K562 (cell line): ENCODE measurements at regions of chr2 and their contacts with region 1.

Region 1: DNA sequence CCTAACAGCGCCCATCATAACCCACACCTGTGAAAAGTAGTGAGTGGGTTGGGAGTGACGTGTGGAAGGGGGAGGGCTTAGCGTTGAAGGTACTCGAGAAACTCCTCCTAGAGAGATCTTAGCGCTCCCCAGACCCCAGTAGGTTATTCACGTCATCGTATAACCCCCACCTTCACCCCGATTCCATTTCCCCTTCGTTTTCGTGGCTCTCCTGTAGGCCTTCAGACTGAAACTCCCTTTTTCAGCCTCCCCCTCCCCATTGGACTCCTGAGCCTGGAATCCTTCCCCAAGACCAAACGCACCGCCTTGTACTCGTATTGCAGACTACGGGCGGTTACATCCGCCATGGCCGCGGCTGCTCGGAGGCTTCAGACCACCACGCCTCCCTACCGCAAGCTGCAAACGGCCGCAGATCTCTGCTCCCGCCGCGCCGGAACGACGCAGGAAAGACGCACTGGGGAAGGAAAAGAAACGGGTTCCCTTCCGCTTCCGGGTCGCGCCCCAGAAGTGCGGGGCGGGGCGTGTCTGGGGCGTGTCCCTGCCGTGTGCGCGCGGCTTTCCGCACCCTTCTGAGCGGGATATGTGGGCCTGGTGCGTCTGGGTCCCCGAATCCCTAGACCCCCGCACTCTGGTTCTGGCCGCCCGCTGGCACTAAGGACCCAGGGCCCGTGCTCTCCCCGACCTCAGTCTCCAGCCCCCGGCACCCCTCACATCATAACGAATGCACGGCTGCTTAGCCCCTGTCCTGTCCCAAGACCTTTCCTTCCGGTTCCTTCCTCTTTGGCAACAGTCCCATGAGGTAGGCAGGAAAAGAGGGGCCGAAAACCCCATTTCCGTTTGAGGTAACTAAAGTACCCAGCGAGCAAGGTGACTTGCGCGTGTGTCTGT is at the start of gene SNRNP200:
- DNase-seq: peak; percentile 89 to 95 (median 92)
- ATAC-seq: peak; percentile 98
- H3K4me3 ChIP-seq: peak within 1 kb of the TSS; percentile 93
- H3K27ac ChIP-seq: peak within 1 kb of the TSS; percentile 91
- H3K4me1 ChIP-seq: peaks cover 13 to 14% of the 10 kb centered on the region in 2 experiments; a peak in 3 of 5 replicates
- H3K27me3 ChIP-seq: no peaks in the 10 kb centered on the region
- CTCF ChIP-seq: no peak
- EP300 ChIP-seq: peak; percentile 43; the same call in 1 of the 2 replicates
- POLR2A ChIP-seq: peak; percentile 97
- RAD21 ChIP-seq: no peak
- polyA plus RNA-seq, gene SNRNP200: 87.9 to 155 TPM

Region 2: DNA sequence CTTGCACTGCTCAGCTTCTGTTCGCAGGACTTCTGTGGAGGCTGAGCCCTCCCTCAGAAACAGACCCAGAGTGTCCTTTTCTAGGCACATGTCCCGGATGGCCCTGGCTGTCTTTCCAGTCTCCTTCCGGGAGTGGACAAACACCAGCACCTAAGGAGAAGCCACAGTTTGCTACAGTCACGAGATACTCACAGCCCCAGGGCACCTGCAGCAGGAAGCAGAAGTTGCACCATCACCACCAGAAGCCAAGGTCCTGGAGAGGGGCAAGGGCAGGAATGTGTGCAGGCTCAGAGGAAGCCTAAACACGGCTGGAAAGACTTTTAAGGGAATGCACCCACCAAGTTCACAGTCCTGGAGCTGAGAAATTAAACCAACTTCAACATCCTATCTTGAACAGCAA is 13.6 kb before region 1 on chr2:
- CTCF ChIA-PET with region 1: no interaction called
- POLR2A ChIA-PET with region 1: interaction called, 15 read pairs
- in situ Hi-C with region 1: no loop called
- intact Hi-C with region 1: no loop called
- DNase-seq: no peak
- ATAC-seq: no peak
- H3K4me3 ChIP-seq: no peak overlapping the region
- H3K27ac ChIP-seq: no peak overlapping the region
- H3K4me1 ChIP-seq: no peaks in the 10 kb centered on the region
- H3K27me3 ChIP-seq: no peaks in the 10 kb centered on the region
- CTCF ChIP-seq: no peak
- EP300 ChIP-seq: no peak
- POLR2A ChIP-seq: no peak
- RAD21 ChIP-seq: no peak

Region 3: GRCh38 chr2:96320728-96321622 is 15.6 kb after region 1 on chr2:
- CTCF ChIA-PET with region 1: no interaction called
- POLR2A ChIA-PET with region 1: interaction called, 11 read pairs
- in situ Hi-C with region 1: no loop called
- intact Hi-C with region 1: loop called (anchors 2 kb)
- DNase-seq: peak; percentile 36 to 62 (median 58)
- ATAC-seq: peak; percentile 59
- H3K4me3 ChIP-seq: peak overlapping the region; percentile 52
- H3K27ac ChIP-seq: peak overlapping the region; percentile 43
- H3K4me1 ChIP-seq: peaks cover 13 to 28% of the 10 kb centered on the region in 2 experiments; a peak in 4 of 5 replicates
- H3K27me3 ChIP-seq: no peaks in the 10 kb centered on the region
- CTCF ChIP-seq: no peak
- EP300 ChIP-seq: no peak
- POLR2A ChIP-seq: 0 out of 2 replicates have a peak, but pooled peaks have one; percentile 15
- RAD21 ChIP-seq: no peak